ENCODE measurements at regions of chr3 and their contacts with region 1.

Region 1: DNA sequence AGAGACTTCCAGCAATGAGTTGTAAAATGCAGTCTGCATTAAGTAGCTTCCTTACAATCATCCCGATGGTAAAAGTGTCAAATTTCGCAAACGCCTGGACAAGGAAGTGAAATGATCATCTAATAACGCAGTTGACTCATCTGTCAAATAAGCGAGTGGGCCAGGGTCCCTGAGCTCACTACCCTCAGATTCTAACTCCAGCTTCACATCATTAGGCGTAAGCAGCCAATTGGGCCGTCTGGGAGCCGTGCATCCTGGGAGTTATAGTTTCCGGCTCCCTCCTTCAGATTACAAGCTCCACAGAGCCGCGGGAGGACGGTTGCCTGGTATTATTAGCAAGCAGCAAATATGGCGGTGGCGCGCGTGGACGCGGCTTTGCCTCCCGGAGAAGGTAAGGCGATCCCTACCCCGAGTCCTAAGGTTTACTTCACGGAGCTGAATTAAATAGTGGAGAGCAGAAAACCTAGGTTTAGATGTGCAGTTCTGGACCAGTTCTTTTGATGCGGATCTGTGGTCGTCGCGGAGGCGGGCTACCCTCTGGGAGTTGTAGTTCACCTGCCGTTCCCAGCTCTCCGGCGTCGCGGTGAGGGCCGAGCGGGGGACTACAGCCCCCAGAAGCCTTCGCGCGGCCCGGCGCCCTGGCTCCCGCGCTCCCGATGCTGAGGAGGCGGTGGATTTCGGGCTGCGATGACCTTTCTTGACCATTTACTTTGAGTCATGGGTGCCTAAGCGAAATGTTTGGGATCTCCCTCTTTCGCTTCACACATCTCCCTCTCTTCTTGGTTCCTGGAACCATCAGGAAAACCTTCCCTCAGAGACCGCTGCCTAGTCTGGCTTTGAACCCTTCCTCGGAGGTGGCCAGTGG is at the start of gene CEP97:
- DNase-seq: peak; percentile 85

Region 2: GRCh38 chr3:101685870-101686412 is 38.6 kb before region 1 on chr3:
- CTCF ChIA-PET with region 1: no interaction called
- POLR2A ChIA-PET with region 1: interaction called, 15 read pairs
- DNase-seq: no peak

Region 3: DNA sequence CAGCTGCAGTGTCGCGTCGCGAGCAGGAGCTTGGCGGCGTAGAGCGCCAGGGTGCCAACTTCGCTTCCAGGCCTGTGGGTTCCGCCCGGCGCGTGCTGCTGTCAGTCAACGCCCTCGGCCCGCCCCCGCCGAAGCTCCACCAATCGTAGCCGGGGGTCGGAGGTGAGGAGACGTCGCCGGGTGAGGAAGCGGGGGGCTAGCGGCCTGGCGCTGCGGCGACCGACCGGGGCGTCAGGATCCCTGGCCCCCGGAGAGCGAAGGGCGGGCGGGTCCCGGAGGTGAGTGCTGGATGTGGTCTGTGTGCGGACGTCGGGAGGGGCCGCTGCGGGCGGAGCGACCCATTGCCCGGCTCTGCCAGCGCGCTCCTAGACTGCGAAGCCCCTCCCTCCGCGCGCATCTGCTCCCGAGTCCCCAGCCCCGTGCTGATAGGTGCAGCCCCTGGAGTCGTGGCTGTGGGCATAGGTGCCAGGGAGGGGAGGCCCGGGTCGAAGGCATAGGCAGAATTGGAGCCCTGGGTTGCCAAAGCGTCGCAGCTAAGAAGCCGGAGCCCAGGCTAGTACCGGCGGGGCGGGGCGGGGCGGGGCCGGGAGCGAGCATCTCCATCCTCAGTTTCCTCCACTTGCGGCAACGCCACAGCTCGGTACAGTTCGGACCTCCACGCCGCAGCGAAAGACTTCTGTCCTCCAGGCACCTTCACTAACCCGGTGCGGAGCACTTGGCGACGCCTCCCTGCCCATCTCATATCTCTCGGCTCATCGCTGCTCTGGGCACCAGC is 54.7 kb after region 1 on chr3 and contains the start of gene NXPE3:
- CTCF ChIA-PET with region 1: no interaction called
- POLR2A ChIA-PET with region 1: interaction called, 10 read pairs
- DNase-seq: peak; percentile 90